T-cell (primary cell): ENCODE measurements at regions of chr1 and their contacts with region 1.

Region 1: DNA sequence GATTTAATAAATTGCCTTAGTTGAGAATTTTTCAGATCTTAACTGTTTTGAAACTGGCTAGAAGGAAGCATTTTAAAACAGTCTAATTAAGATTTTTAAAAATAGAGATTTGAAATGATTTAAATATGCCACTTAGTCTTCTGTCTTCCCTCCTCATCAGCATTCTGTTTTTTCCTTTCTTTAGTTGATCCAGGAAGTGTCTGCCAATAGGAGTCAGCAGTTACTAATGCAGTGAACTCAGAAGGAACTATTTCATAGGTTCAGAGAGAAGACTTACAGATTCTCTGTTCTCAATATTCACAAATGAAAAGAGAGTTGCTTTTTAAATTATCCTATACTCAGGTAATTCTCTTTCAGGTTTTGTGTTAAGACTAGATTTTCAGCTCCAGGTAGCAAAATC is 84.5 kb downstream of the RPS6KC1 start:
- DNase-seq: no peak
- ATAC-seq: no peak
- H3K4me3 ChIP-seq: no peak overlapping the region
- H3K4me3 Mint-ChIP-seq: no peak overlapping the region
- H3K27ac ChIP-seq: no peak overlapping the region
- H3K27ac Mint-ChIP-seq: no peak overlapping the region
- H3K4me1 ChIP-seq: no peaks in the 10 kb centered on the region
- H3K4me1 Mint-ChIP-seq: peaks cover 10 to 23% (median 11%) of the 10 kb centered on the region in 3 donors
- H3K27me3 ChIP-seq: no peaks in the 10 kb centered on the region
- H3K27me3 Mint-ChIP-seq: no peaks in the 10 kb centered on the region

Region 2: GRCh38 chr1:213122514-213122929 is 13.1 kb before region 1 on chr1:
- CTCF ChIA-PET with region 1: interaction called, 3 to 10 read pairs
- POLR2A ChIA-PET with region 1: no interaction called
- DNase-seq: peak in 1 of 35 experiments; percentile 49
- ATAC-seq: no peak
- H3K4me3 ChIP-seq: no peak overlapping the region
- H3K4me3 Mint-ChIP-seq: no peak overlapping the region
- H3K27ac ChIP-seq: no peak overlapping the region
- H3K27ac Mint-ChIP-seq: no peak overlapping the region
- H3K4me1 ChIP-seq: no peaks in the 10 kb centered on the region
- H3K4me1 Mint-ChIP-seq: peaks cover 0 to 3% (median 0%) of the 10 kb centered on the region in 3 donors
- H3K27me3 ChIP-seq: no peaks in the 10 kb centered on the region
- H3K27me3 Mint-ChIP-seq: no peaks in the 10 kb centered on the region

Region 3: DNA sequence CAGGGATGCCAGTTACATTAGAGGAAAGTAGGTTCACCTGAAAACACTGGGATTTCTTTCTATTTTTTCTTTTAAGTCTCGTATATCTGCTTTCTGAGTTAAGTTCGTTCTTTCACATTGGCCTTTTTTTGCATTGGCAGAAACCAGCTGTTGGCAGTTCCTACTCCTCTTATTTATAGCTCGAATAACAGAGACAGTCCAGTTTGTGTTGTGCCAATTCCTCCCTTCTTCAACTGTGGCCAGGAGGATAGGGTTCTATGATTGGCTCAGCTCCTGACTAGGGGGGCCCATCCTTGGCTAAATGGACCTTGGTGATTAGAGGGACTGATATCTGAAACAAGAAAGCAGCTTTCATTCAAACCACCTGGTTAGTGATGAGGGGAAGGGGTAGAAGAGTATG is 31.3 kb after region 1 on chr1:
- CTCF ChIA-PET with region 1: no interaction called
- POLR2A ChIA-PET with region 1: no interaction called
- DNase-seq: no peak
- ATAC-seq: no peak
- H3K4me3 ChIP-seq: no peak overlapping the region
- H3K4me3 Mint-ChIP-seq: no peak overlapping the region
- H3K27ac ChIP-seq: no peak overlapping the region
- H3K27ac Mint-ChIP-seq: no peak overlapping the region
- H3K4me1 ChIP-seq: no peaks in the 10 kb centered on the region
- H3K4me1 Mint-ChIP-seq: peaks cover 0 to 1% (median 0%) of the 10 kb centered on the region in 3 donors
- H3K27me3 ChIP-seq: no peaks in the 10 kb centered on the region
- H3K27me3 Mint-ChIP-seq: no peaks in the 10 kb centered on the region

Region 4: GRCh38 chr1:213231795-213232231 is 96.2 kb after region 1 on chr1:
- CTCF ChIA-PET with region 1: no interaction called
- POLR2A ChIA-PET with region 1: no interaction called
- DNase-seq: no peak
- ATAC-seq: no peak
- H3K4me3 ChIP-seq: no peak overlapping the region
- H3K4me3 Mint-ChIP-seq: no peak overlapping the region
- H3K27ac ChIP-seq: no peak overlapping the region
- H3K27ac Mint-ChIP-seq: no peak overlapping the region
- H3K4me1 ChIP-seq: no peaks in the 10 kb centered on the region
- H3K4me1 Mint-ChIP-seq: peaks cover 0 to 4% (median 2%) of the 10 kb centered on the region in 3 donors
- H3K27me3 ChIP-seq: no peaks in the 10 kb centered on the region
- H3K27me3 Mint-ChIP-seq: no peaks in the 10 kb centered on the region